Activated CD4-positive, alpha-beta T cell treated with anti-CD3 and anti-CD28 coated beads, Interleukin-2, amount 10 ng/mL, durations not matched to agents 24 days and 14 days (primary cell): ENCODE measurements at regions of chr1 and their contacts with region 1.

Region 1: GRCh38 chr1:46223472-46223943 is 20.4 kb downstream of the LURAP1 start:
- DNase-seq: peak; percentile 86
- H3K4me3 Mint-ChIP-seq: no peak overlapping the region
- H3K27ac Mint-ChIP-seq: no peak overlapping the region
- H3K4me1 Mint-ChIP-seq: peaks cover 4% of the 10 kb centered on the region
- H3K27me3 Mint-ChIP-seq: no peaks in the 10 kb centered on the region

Region 2: GRCh38 chr1:46036894-46037839 is 186.3 kb before region 1 on chr1:
- intact Hi-C with region 1: loop called (anchors 1 kb)
- DNase-seq: peak; percentile 95
- H3K4me3 Mint-ChIP-seq: no peak overlapping the region
- H3K27ac Mint-ChIP-seq: no peak overlapping the region
- H3K4me1 Mint-ChIP-seq: no peaks in the 10 kb centered on the region
- H3K27me3 Mint-ChIP-seq: no peaks in the 10 kb centered on the region